ENCODE measurements at regions of chr6 and their contacts with region 1.

Region 1: DNA sequence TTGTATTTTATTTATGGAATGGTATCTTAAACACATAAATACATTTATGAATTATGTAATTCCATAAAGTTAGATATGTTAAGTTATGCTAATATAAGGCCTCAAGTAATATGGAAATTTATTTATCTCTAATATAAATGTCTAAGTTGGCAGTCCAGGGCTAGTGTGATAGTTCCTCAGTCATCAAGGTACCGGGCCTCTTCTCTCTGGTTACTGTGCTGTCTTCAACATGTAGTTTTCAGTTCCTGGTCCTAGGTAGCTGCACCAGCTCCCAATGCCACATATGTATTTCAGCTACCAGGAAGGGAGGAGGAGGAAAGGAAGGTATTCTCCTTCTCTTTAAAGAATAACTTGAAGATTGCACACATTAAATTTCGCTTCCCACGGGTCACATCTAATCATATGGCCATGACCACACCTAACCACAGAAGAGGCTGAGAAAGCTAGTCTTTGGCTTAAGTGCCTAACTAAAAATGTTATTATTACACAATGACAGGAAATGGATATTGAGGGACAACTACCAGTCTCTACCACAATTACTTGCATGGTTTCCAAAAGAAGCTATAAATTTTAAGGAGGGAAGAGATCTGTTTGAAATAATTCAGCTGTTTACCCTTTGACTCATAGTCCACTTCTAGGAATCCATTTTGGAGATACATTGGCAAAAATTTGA is 68.6 kb downstream of the BCKDHB start:
- DNase-seq: no peak

Region 2: DNA sequence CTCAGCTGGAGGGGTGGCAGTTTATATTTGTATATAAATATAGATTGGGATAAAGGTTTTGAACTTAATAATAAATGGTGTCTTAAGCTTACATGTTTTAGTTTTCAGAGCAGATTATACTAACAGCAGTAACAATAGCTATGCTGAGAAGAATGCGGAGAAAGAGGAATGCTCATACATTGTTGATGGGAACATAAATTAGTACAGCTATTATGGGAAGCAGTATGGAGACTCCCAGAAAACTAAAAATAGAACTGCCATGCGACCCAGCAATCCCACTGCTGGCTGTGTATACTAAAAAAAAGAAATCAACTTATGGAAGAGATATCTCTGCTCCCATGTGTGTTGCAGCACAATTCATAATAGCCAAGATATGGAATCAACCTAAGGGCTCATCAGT is 59.4 kb after region 1 on chr6:
- intact Hi-C with region 1: loop called in 1 of 2 experiments (anchors 2 kb)
- DNase-seq: no peak

Measured in posterior vena cava (tissue), 2 donors.